Caco-2 (cell line): ENCODE measurements at regions of chr9 and their contacts with region 1.

Region 1: DNA sequence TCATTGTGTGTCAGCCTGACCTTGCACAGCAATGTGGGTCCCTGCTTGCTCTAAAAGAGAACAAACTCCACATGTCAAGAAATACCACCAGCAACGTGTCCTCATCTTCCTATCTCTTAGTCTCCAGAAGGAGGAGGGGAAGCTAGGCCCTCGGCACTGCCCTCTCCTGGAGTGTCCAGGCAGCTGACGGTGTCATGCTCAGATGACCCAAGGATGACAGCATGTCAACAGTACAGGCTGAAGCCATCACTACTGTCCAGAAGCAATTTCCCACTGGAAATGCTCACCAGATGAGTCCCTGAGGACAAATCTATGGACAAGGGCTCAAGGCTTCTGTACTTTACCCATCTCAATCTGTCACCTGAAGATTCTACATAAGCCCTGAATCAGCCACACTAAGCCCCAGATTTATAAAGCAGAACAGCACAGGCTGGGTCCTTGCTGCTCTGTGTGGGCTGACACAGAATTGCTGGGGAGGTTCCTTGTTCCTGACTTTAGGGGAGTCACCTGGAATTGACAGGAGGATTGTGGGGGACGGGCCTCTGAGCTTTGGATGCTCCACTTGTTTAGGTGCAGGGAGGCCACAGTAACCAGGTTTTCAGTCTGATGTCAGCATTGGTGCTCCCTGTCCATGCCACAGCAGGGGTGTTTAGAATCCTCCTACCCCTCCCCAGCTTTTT is 210.2 kb downstream of the DAB2IP start:
- DNase-seq: peak; percentile 68 to 69
- H3K4me3 ChIP-seq: no peak overlapping the region
- H3K4me3 Mint-ChIP-seq: no peak overlapping the region
- H3K27ac Mint-ChIP-seq: no peak overlapping the region
- H3K4me1 ChIP-seq: no peaks in the 10 kb centered on the region
- H3K4me1 Mint-ChIP-seq: no peaks in the 10 kb centered on the region
- H3K27me3 ChIP-seq: no peaks in the 10 kb centered on the region
- H3K27me3 Mint-ChIP-seq: peaks cover 14% of the 10 kb centered on the region
- CTCF ChIP-seq: peak; percentile 58 to 89

Region 2: GRCh38 chr9:121634329-121635261 is 227.0 kb before region 1 on chr9:
- CTCF ChIA-PET with region 1: interaction called, 10 read pairs
- POLR2A ChIA-PET with region 1: no interaction called
- intact Hi-C with region 1: loop called (anchors 1 kb)
- DNase-seq: peak; percentile 72 to 74
- H3K4me3 ChIP-seq: no peak overlapping the region
- H3K4me3 Mint-ChIP-seq: no peak overlapping the region
- H3K27ac Mint-ChIP-seq: no peak overlapping the region
- H3K4me1 ChIP-seq: peaks cover 12% of the 10 kb centered on the region
- H3K4me1 Mint-ChIP-seq: peaks cover 5% of the 10 kb centered on the region
- H3K27me3 ChIP-seq: no peaks in the 10 kb centered on the region
- H3K27me3 Mint-ChIP-seq: no peaks in the 10 kb centered on the region
- CTCF ChIP-seq: peak; percentile 79 to 87

Region 3: GRCh38 chr9:121735065-121735789 is 126.4 kb before region 1 on chr9:
- CTCF ChIA-PET with region 1: interaction called, 11 read pairs
- POLR2A ChIA-PET with region 1: no interaction called
- intact Hi-C with region 1: no loop called
- DNase-seq: peak; percentile 49 to 57
- H3K4me3 ChIP-seq: no peak overlapping the region
- H3K4me3 Mint-ChIP-seq: peak overlapping the region; percentile 68
- H3K27ac Mint-ChIP-seq: peak overlapping the region; percentile 9
- H3K4me1 ChIP-seq: peaks cover 36% of the 10 kb centered on the region
- H3K4me1 Mint-ChIP-seq: peaks cover 24% of the 10 kb centered on the region
- H3K27me3 ChIP-seq: no peaks in the 10 kb centered on the region
- H3K27me3 Mint-ChIP-seq: no peaks in the 10 kb centered on the region
- CTCF ChIP-seq: peak; percentile 31 to 57

Region 4: GRCh38 chr9:121744002-121744686 is 117.5 kb before region 1 on chr9:
- CTCF ChIA-PET with region 1: interaction called, 3 read pairs
- POLR2A ChIA-PET with region 1: no interaction called
- intact Hi-C with region 1: loop called (anchors 1 kb)
- DNase-seq: peak; percentile 71 to 76
- H3K4me3 ChIP-seq: peak overlapping the region; percentile 32
- H3K4me3 Mint-ChIP-seq: no peak overlapping the region
- H3K27ac Mint-ChIP-seq: no peak overlapping the region
- H3K4me1 ChIP-seq: peaks cover 26% of the 10 kb centered on the region
- H3K4me1 Mint-ChIP-seq: peaks cover 5% of the 10 kb centered on the region
- H3K27me3 ChIP-seq: no peaks in the 10 kb centered on the region
- H3K27me3 Mint-ChIP-seq: no peaks in the 10 kb centered on the region
- CTCF ChIP-seq: peak; percentile 57 to 81